Mammary epithelial cell (primary cell): ENCODE measurements at regions of chr20 and their contacts with region 1.

Region 1: GRCh38 chr20:64053841-64054661 is 4.6 kb upstream of the SOX18 start:
- DNase-seq: no peak
- H3K4me3 ChIP-seq: no peak overlapping the region
- H3K27ac ChIP-seq: no peak overlapping the region
- H3K4me1 ChIP-seq: peaks cover 14% of the 10 kb centered on the region
- H3K27me3 ChIP-seq: no peaks in the 10 kb centered on the region
- CTCF ChIP-seq: peak in 1 of 2 donors; percentile 17

Region 2: GRCh38 chr20:63980806-63981728 is 73.0 kb before region 1 on chr20 and contains the start of gene PRPF6:
- CTCF ChIA-PET with region 1: no interaction called
- dilution Hi-C with region 1: no loop called
- in situ Hi-C with region 1: no loop called
- intact Hi-C with region 1: no loop called
- DNase-seq: peak; percentile 90
- H3K4me3 ChIP-seq: peak within 1 kb of the TSS; percentile 71 to 94 (median 87)
- H3K27ac ChIP-seq: peak within 1 kb of the TSS; percentile 73
- H3K4me1 ChIP-seq: peaks cover 38% of the 10 kb centered on the region
- H3K27me3 ChIP-seq: no peaks in the 10 kb centered on the region
- CTCF ChIP-seq: peak; percentile 53 to 93
- total RNA-seq, gene PRPF6: 33.5 to 56.9 TPM

Region 3: GRCh38 chr20:64001607-64002011 is 52.4 kb before region 1 on chr20:
- CTCF ChIA-PET with region 1: no interaction called
- dilution Hi-C with region 1: no loop called
- in situ Hi-C with region 1: no loop called
- intact Hi-C with region 1: no loop called
- DNase-seq: peak; percentile 12
- H3K4me3 ChIP-seq: no peak overlapping the region
- H3K27ac ChIP-seq: no peak overlapping the region
- H3K4me1 ChIP-seq: no peaks in the 10 kb centered on the region
- H3K27me3 ChIP-seq: no peaks in the 10 kb centered on the region
- CTCF ChIP-seq: no peak

Region 4: GRCh38 chr20:64151634-64152530 is 97.8 kb after region 1 on chr20:
- CTCF ChIA-PET with region 1: no interaction called
- dilution Hi-C with region 1: loop called (anchors 5 kb)
- in situ Hi-C with region 1: no loop called
- intact Hi-C with region 1: no loop called
- DNase-seq: peak; percentile 20
- H3K4me3 ChIP-seq: no peak overlapping the region
- H3K27ac ChIP-seq: no peak overlapping the region
- H3K4me1 ChIP-seq: no peaks in the 10 kb centered on the region
- H3K27me3 ChIP-seq: no peaks in the 10 kb centered on the region
- CTCF ChIP-seq: no peak

Region 5: GRCh38 chr20:64232794-64233193 is 178.7 kb after region 1 on chr20:
- CTCF ChIA-PET with region 1: no interaction called
- dilution Hi-C with region 1: no loop called
- in situ Hi-C with region 1: no loop called
- intact Hi-C with region 1: no loop called
- DNase-seq: no peak
- H3K4me3 ChIP-seq: no peak overlapping the region
- H3K27ac ChIP-seq: no peak overlapping the region
- H3K4me1 ChIP-seq: no peaks in the 10 kb centered on the region
- H3K27me3 ChIP-seq: peaks cover 2% of the 10 kb centered on the region
- CTCF ChIP-seq: no peak